Dorsolateral prefrontal cortex (tissue), 120 donors: ENCODE measurements at regions of chr12 and their contacts with region 1.

Region 1: GRCh38 chr12:85007836-85008235 is 28.2 kb downstream of the TSPAN19 start:
- DNase-seq: no peak
- H3K4me3 ChIP-seq: no peak overlapping the region
- H3K27ac ChIP-seq: no peak overlapping the region
- H3K27me3 ChIP-seq: no peaks in the 10 kb centered on the region
- CTCF ChIP-seq: no peak

Region 2: DNA sequence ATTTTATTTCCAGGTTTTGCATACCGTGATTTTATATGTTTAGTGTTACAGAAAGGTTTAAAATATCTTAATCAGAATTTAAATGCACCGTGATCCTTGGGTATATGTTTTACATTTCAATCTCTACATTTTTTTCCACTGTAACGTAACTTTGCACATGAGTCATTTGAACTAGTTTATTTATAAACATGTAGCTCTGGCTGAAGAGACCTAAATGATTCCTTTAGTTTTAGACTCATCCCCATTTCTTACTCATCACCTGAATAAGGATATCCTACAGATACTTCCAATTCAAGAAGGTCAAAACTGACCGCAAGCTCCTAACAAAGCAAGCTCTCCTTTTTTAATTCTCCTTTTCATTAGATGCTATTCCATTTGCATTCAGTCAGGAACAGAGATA is 52.5 kb before region 1 on chr12:
- intact Hi-C with region 1: loop called in 1 of 2 experiments (anchors 10 kb)
- DNase-seq: no peak
- H3K4me3 ChIP-seq: no peak overlapping the region
- H3K27ac ChIP-seq: no peak overlapping the region
- H3K27me3 ChIP-seq: no peaks in the 10 kb centered on the region
- CTCF ChIP-seq: no peak